ENCODE measurements at regions of chr1 and their contacts with region 1.

Region 1: DNA sequence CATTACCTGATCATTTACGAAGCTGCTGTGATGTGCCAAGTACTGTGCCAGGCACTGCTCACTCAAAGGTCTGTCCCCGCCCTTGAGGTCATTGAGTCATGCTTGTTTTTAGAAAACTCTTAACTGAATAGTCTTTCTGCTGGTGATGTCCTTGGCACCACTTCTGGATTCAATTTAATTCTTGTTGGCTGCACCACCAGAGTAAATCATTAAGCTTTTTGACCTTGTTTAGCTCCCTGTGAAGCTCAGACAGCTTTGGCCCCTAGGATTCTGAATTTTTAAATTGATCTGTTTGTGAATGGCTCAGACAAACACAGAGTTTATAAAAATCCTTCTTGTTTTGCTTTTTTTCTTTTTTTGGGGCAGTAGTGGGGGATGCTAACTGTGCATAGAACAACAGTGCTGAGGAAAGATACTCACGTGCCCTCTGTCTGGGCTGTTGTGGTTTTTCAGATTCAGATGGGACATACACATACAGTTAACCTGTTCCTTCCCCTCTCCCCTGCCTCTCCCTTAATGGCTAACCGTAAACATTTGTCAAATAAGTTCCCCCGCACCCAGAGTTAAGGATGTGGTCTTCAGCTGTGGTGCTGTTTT is 67.6 kb downstream of the MTR start:
- DNase-seq: peak; percentile 95
- ATAC-seq: peak; percentile 94
- H3K4me3 ChIP-seq: peak overlapping the region in 1 of 3 experiments; percentile 27; a peak in 1 of 6 replicates
- H3K27ac ChIP-seq: peak overlapping the region; percentile 75
- H3K4me1 ChIP-seq: peaks cover 44% of the 10 kb centered on the region
- H3K27me3 ChIP-seq: no peaks in the 10 kb centered on the region
- CTCF ChIP-seq: no peak
- EP300 ChIP-seq: peak in 1 of 2 experiments; percentile 81; a peak in 2 of 4 replicates
- POLR2A ChIP-seq: no peak
- RAD21 ChIP-seq: no peak

Region 2: DNA sequence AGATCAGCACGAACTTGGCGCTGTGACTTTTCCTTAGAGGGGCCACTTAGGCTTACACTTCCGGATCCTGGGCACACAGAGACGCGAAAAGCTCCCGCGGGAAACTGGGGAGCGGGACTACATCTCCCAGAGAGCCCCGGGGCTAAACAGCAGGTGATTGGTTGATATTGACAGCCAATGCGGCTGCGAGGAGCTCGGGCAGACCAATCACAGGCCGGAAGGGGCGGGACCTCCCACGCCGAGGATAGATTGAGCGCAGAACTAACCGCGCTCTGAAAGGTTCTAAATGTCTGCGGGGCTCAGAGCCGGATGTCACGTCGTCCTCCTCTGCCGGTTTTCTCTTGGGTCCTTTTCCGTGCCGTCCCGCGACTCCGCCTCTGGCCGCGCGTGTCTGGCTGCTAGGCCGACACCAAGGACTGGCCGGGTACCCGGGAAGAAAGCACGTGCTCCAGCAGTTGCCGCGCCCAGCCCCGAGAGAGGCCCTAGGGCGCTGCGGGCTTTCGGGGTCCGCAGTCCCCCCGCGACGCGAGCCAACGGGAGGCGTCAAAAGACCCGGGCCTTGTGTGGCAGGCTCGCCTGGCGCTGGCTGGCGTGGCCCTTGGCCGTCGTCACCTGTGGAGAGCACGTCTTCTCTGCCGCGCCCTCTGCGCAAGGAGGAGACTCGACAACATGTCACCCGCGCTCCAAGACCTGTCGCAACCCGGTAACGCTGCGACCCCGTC is 67.5 kb before region 1 on chr1 and contains the start of gene MTR:
- CTCF ChIA-PET with region 1: no interaction called
- POLR2A ChIA-PET with region 1: interaction called, 39 read pairs
- in situ Hi-C with region 1: no loop called
- intact Hi-C with region 1: loop called (anchors 1 kb)
- DNase-seq: peak; percentile 97
- ATAC-seq: peak; percentile 99
- H3K4me3 ChIP-seq: peak within 1 kb of the TSS; percentile 86 to 87 (median 86)
- H3K27ac ChIP-seq: peak within 1 kb of the TSS; percentile 87
- H3K4me1 ChIP-seq: peaks cover 35% of the 10 kb centered on the region
- H3K27me3 ChIP-seq: no peaks in the 10 kb centered on the region
- CTCF ChIP-seq: no peak; the same call in 1 of the 2 replicates
- EP300 ChIP-seq: 0 out of 4 replicates have a peak, but pooled peaks of 1 of the 2 experiments have one; percentile 7
- POLR2A ChIP-seq: peak; percentile 90 to 92
- RAD21 ChIP-seq: no peak
- total RNA-seq, gene MTR: 36.1 and 51.6 TPM in 2 replicates

Region 3: DNA sequence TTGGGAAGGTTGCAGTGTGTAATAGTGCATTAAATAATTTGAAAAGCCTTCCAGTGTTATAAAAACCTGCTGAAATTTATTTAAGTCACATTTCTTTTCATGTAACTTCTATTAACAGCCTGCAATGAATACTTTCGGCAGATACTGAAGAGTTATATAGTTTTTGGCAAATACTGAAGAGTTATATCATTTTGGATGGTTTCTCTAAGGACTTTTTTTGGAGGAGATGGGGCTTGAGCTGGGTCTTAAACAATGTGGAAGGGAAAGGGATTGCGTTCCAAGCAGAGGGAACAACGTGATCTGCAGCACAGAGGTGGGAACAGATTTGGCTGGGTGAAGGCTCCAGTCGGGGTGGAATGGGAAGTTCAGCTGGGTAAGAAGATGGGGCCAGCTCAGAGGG is 27.8 kb before region 1 on chr1:
- CTCF ChIA-PET with region 1: no interaction called
- POLR2A ChIA-PET with region 1: interaction called, 12 read pairs
- in situ Hi-C with region 1: no loop called
- intact Hi-C with region 1: no loop called
- DNase-seq: no peak
- ATAC-seq: no peak
- H3K4me3 ChIP-seq: no peak overlapping the region
- H3K27ac ChIP-seq: no peak overlapping the region
- H3K4me1 ChIP-seq: peaks cover 19% of the 10 kb centered on the region
- H3K27me3 ChIP-seq: no peaks in the 10 kb centered on the region
- CTCF ChIP-seq: no peak
- EP300 ChIP-seq: no peak
- POLR2A ChIP-seq: no peak
- RAD21 ChIP-seq: no peak

Region 4: DNA sequence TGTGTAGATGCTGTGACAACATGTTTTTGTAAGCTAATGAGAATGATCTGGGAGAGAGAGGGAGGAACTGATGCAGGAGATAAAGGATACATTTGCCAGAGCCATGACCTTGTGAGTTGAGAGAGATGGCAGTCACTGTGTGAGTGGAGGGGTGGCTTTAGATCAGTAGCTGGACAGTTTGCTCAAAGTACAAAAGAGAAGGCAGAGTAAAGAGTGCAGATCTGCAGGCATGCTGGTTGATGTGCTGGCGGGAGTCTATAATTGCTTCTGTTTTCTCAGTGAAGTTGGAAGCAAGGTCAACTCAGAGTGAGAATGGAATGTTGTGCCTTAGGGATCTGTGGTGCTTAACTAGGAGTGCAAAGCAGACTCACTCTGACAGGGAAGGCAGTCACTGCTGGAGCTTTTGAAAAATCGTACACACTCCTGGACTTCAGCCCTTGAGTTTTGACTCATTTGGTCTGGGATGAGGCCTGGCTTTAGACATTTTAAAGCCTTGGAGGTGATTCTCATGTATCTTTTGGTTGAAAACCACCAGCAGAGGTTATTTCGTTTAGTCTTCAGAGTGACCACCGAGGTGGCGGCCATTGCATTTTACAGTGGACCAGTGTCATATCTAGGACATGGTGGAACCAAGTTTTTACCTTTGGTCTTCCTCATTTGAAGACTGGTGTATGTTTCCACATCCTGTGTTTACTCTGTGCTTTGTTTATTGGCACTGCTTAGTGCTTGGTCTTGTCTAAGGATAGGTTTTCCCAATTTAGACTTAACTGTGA is 18.0 kb before region 1 on chr1:
- CTCF ChIA-PET with region 1: no interaction called
- POLR2A ChIA-PET with region 1: interaction called, 75 read pairs
- in situ Hi-C with region 1: no loop called
- intact Hi-C with region 1: loop called (anchors 1 kb)
- DNase-seq: peak; percentile 96
- ATAC-seq: peak; percentile 98
- H3K4me3 ChIP-seq: peak overlapping the region; percentile 27 to 53 (median 33); a peak in 4 of 6 replicates
- H3K27ac ChIP-seq: peak overlapping the region; percentile 95
- H3K4me1 ChIP-seq: peaks cover 42% of the 10 kb centered on the region
- H3K27me3 ChIP-seq: no peaks in the 10 kb centered on the region
- CTCF ChIP-seq: no peak
- EP300 ChIP-seq: peak in 1 of 2 experiments; percentile 54; a peak in 2 of 4 replicates
- POLR2A ChIP-seq: peak in 1 of 2 experiments; percentile 54; a peak in 1 of 4 replicates
- RAD21 ChIP-seq: no peak

Region 5: DNA sequence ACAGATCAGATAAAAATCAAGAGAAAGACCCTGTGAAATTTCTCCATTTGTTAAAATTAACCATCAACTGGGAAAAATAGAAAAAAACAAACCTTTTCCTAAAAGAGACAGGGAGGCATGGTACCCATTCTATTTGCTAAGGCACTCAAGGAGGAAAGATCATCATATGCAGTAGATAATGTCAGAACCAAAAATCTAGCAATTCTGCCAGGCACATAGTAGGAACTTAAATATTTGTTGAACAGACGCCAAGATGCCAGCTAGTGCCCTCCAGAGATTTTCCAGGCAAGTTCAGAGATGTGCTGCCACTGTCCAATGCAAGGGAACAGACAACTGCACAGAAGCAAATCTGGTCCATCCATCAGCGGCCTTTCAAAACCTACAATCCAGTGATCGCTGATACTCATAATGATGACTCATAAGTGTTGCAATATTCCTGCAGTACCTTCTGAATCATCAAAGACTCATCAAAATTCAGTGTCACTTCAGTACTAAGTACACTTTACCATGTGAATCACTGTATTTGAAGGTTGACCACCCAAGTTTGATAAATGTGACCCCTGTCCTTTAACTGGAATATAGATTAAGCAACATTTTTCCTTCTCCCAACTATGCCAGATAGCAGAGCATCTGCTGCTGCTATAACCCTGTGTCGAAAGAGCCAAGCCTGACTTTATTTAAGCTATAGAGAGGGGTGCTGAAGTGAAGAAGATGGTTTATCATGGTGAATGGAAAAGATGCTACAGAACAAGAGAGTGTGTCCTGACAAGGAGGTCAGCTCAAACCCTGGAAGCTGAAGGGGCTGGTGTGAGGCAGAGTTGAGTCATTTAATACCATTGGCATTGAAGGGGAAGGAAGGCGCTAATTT is 42.4 kb after region 1 on chr1:
- CTCF ChIA-PET with region 1: no interaction called
- POLR2A ChIA-PET with region 1: interaction called, 3 read pairs
- in situ Hi-C with region 1: no loop called
- intact Hi-C with region 1: loop called (anchors 5 kb)
- DNase-seq: peak; percentile 91
- ATAC-seq: peak; percentile 79
- H3K4me3 ChIP-seq: no peak overlapping the region
- H3K27ac ChIP-seq: no peak overlapping the region
- H3K4me1 ChIP-seq: peaks cover 21% of the 10 kb centered on the region
- H3K27me3 ChIP-seq: no peaks in the 10 kb centered on the region; a peak in 1 of 5 replicates
- CTCF ChIP-seq: no peak
- EP300 ChIP-seq: peak; percentile 51 to 87; a peak in 3 of 4 replicates
- POLR2A ChIP-seq: no peak
- RAD21 ChIP-seq: no peak

Region 6: DNA sequence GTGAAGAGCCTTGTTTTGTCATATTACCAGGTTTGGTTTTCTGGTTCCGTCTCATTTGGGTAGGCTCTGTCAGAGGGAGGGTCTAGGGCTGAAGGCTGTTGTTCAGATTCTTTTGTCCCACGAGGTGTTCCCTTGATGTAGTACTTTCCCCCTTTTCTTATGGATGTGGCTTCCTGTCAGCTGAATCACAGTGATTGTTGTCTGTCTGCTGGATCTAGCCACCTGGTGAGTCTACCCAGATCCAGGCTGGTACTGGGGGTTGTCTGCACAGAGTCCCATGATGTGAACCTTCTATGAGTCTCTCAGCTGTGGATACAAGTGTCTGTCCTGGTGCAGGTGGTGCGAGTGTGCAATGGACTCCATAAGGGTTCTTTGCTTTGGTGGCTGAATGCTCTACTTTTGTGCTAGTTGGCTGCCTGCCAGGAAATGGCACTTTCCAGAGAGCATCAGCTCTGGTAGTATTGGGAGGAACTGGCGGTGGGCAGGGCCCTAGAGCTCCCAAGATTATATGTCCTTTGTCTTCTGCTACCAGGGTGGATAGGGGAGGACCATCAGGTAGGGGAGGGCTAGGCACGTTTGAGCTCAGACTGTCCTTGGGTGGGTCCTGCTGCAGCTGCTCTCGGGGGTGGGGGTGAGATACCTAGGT is 425.3 kb after region 1 on chr1:
- CTCF ChIA-PET with region 1: no interaction called
- POLR2A ChIA-PET with region 1: no interaction called
- in situ Hi-C with region 1: no loop called
- intact Hi-C with region 1: no loop called
- DNase-seq: no peak
- ATAC-seq: no peak
- H3K4me3 ChIP-seq: no peak overlapping the region
- H3K27ac ChIP-seq: no peak overlapping the region
- H3K4me1 ChIP-seq: no peaks in the 10 kb centered on the region
- H3K27me3 ChIP-seq: no peaks in the 10 kb centered on the region
- CTCF ChIP-seq: no peak
- EP300 ChIP-seq: no peak
- POLR2A ChIP-seq: no peak
- RAD21 ChIP-seq: no peak